ENCODE measurements at regions of chr11 and their contacts with region 1.

Region 1: DNA sequence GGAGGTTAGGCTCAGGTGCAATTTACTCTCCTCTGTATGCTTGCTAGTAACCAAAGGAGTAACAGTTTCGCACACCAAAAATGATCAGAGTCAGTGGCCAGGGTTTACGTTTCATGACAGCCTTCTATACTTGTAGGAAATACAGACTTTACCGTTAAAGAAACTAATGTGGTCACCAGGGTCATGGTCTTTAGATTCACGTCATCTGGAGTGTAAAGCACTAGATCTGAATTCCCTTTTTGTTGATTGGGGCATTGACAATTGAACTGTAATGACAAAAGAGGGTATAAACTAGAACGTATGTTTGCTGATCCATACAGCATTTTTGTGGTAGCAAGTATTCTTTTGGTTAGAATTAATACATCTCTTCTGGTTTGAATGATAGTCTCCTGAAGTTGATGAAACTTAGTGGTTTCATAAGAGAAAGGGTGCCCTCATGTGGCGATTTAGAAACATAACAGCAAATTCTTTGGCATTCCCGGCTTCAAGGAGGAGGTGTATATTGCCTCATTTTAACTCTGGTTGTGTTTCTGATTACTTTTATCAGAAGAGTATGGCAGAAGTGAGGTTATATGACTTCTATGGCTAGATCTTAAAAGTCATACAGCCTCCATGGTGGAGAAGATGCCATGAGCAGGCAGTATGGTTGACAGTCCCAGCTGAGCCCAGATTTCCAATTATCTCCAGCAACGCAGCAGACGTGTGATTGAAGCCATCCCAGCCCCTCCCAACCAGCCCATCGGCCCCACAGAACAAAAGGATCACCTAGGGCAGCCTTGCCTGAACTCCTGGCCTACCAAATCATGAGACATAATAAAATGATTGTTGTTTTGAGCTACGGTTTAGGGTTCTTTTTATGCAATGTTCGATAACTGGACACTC is 35.1 kb downstream of the MMP7 start:
- DNase-seq: peak in 1 of 2 donors; percentile 93
- H3K4me3 ChIP-seq: no peak overlapping the region
- H3K27ac ChIP-seq: no peak overlapping the region
- H3K4me1 ChIP-seq: peaks cover 0 to 24% (median 10%) of the 10 kb centered on the region in 4 donors
- H3K27me3 ChIP-seq: peaks cover 0 to 9% (median 0%) of the 10 kb centered on the region in 3 donors
- CTCF ChIP-seq: peak in 5 of 7 experiments; percentile 59 to 76 (median 73)
- EP300 ChIP-seq: no peak
- POLR2A ChIP-seq: no peak

Region 2: GRCh38 chr11:102007567-102008437 is 487.6 kb before region 1 on chr11:
- intact Hi-C with region 1: no loop called
- DNase-seq: peak; percentile 50 to 76
- H3K4me3 ChIP-seq: no peak overlapping the region
- H3K27ac ChIP-seq: peak overlapping the region; percentile 55 to 82 (median 59)
- H3K4me1 ChIP-seq: peaks cover 0 to 21% (median 4%) of the 10 kb centered on the region in 4 donors
- H3K27me3 ChIP-seq: no peaks in the 10 kb centered on the region
- CTCF ChIP-seq: peak in 5 of 7 experiments; percentile 8 to 59 (median 54)
- EP300 ChIP-seq: no peak
- POLR2A ChIP-seq: no peak

Region 3: DNA sequence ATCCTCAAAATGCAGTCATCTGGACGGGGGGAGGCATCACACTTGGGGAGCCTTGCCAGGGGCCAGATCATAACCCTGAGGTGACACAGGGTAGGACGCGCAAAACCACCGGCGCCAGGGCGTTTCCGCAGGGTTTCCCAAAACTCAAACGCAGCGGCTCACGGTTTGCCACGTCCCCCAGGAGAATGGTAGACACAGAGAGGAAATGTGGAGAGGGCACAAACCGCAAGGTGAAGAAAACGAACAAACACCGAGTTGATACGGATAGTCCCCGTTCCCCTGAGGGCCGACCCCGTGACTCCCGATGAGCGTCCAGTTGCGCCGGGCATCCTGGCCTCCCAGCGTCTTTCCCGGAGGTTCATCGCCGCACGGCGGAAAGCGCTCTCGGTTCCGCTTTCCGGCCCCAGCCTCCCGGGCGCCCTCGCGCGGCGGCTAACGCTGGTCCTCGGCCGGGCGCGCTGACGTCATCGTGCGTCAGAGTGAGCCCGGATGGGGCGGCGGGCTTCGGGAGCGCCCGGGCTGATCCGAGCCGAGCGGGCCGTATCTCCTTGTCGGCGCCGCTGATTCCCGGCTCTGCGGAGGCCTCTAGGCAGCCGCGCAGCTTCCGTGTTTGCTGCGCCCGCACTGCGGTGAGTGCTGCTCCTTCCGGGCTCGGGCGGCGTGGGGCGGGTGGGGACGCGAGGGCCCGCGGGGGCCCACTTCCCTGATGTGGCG is 148.5 kb before region 1 on chr11 and contains the start of gene BIRC2:
- intact Hi-C with region 1: loop called (anchors 10 kb)
- DNase-seq: peak; percentile 97 to 98
- H3K4me3 ChIP-seq: peak within 1 kb of the TSS; percentile 59 to 68 (median 63)
- H3K27ac ChIP-seq: peak within 1 kb of the TSS; percentile 93 to 99 (median 98)
- H3K4me1 ChIP-seq: peaks cover 10 to 41% (median 26%) of the 10 kb centered on the region in 4 donors
- H3K27me3 ChIP-seq: no peaks in the 10 kb centered on the region
- CTCF ChIP-seq: peak in 5 of 7 experiments; percentile 61 to 87 (median 78)
- EP300 ChIP-seq: no peak
- POLR2A ChIP-seq: peak in 2 of 4 donors; percentile 59 to 66
- total RNA-seq, gene BIRC2: 33.6 to 301 (median 55.4) TPM

Measured in stomach (tissue), 19 donors.